Activated B cell treated with CpG ODN at 0.5 μM for 24 hours (primary cell): ENCODE measurements at regions of chr16 and their contacts with region 1.

Region 1: DNA sequence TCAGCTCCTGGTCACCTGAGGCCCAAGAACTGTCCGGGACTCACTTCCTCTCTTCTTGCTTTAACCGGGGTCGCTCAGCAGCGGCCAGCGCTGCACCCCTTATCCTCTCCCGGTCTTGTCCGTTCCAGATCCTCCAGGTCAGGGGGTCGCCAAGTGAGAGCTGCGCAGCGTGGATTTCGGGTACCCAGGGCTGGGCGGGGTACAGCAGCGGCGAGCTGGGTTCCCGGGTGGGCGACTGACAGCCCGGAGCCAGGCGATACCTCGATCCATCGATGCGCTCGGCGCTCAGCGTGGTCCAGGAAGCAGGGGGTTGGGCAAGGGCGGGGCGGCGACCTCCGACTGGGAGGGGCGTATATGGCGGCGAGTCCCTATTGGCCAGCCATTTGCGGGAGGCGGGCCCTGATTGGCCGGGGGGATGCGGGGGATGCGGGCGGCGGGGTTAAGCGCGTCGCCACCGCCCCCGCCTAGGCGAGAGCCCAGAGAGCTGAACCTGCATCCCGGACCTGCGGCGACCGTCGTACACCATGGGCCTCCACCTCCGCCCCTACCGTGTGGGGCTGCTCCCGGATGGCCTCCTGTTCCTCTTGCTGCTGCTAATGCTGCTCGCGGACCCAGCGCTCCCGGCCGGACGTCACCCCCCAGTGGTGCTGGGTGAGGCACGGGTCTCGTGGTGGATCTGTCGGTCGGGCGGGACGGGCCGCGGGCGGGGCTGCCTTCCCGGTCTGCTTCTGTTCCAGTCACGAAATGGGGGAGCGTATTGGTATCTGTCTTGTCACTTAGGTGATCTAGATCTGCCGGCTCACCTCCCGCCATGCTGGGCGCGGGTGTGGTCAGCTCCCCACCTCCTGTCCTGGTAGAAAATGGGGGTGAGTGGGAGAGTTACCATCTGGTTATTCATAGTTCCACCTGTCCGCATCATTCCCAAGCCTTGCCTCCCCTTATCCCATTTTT is at the start of gene PLA2G15:
- DNase-seq: peak; percentile 96
- ATAC-seq: peak; percentile 99
- H3K4me3 Mint-ChIP-seq: peak within 1 kb of the TSS; percentile 98
- H3K27ac Mint-ChIP-seq: peak within 1 kb of the TSS; percentile 85
- H3K4me1 Mint-ChIP-seq: peaks cover 32% of the 10 kb centered on the region
- H3K27me3 Mint-ChIP-seq: no peaks in the 10 kb centered on the region
- CTCF ChIP-seq: no peak
- total RNA-seq, gene PLA2G15: 5.7 and 8.6 TPM in 2 replicates

Region 2: DNA sequence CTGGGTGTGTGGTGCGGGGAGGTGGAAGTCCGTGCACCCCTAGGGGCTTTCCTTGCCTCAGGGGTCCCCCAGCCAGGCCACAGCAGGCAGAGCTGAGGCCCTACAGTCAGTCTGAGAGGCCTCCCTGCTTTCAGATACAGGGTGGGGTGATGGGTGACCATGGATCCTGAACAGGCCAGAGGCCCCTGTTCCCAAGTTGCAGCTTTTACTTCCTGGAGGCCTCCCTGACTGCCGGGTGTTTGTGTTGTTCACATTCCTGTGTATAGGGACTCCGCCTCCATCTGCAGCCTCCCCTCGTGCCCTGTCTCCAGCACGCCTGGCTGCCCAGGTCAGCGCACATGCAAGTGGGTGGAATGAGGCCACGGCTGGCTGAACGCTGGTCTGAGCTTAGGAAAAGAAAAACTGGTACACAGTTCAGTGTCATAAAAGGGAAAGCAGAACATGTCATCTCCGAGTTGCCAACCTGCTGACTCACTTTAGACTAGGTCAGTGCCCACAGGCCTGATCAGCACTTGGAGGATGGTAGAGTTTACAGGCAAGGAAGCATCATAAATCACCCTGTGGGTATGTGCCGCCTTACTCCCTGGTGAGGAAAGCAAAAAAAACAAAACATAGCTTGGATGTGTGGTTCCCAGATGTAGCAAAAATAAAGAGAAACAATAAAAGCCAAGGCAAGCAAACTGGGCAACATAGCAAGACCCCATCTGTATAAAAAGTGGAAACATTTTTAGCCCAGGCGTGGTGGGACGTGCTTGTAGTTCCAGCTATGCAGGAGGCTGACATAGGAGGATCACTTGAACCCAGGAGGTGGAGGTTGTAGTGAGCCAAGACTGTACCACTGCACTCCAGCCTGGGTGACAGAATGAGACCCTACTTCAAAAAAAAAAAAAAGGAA is 13.0 kb after region 1 on chr16:
- CTCF ChIA-PET with region 1: interaction called, 11 read pairs
- POLR2A ChIA-PET with region 1: interaction called, 10 read pairs
- intact Hi-C with region 1: loop called (anchors 1 kb)
- DNase-seq: no peak
- ATAC-seq: peak; percentile 43
- H3K4me3 Mint-ChIP-seq: peak overlapping the region; percentile 44
- H3K27ac Mint-ChIP-seq: peak overlapping the region; percentile 88
- H3K4me1 Mint-ChIP-seq: peaks cover 34% of the 10 kb centered on the region
- H3K27me3 Mint-ChIP-seq: no peaks in the 10 kb centered on the region
- CTCF ChIP-seq: no peak

Region 3: DNA sequence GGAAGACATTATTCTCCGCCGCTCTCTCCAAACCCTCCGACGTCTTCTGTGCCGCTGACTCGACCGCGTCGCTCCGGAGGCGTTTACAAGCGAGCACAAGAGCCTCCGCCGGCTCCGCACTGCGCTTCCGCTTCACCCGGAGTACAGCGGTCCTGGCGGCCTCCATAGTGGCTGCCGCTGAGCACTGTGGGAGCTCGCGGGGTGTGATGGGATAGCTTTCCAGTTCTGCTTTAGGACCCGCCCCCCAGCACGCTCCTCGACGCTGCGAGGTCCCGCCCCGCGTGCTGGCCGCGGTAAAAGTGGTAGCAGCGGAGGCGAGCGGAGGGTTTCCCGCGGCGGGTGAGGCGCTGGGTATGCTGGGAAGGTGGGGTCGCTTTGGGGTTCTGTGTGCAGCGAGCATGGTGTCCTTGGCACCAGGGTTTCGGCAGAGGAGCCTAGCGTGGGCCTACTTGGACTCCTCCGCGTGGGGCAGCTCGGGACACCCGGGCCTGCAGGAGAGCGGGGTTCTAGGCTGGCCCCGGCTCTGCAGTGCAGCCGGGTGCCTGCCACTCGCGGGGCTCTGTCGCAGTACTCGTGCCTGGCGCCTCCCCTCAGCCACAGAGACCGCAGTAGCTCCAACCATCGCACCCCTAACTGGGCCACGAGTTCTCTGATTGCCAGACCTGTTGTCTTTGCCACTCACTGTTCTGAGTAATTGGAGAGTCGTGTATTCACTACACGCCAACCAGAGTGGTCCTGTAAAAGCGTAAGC is 65.8 kb after region 1 on chr16 and contains the starts of genes PRMT7 and SLC7A6OS:
- CTCF ChIA-PET with region 1: interaction called, 4 read pairs
- POLR2A ChIA-PET with region 1: interaction called, 11 read pairs
- intact Hi-C with region 1: loop called (anchors 2 kb)
- DNase-seq: peak; percentile 87
- ATAC-seq: peak; percentile 99
- H3K4me3 Mint-ChIP-seq: peak within 1 kb of the TSS; percentile 98
- H3K27ac Mint-ChIP-seq: peak within 1 kb of the TSS; percentile 93
- H3K4me1 Mint-ChIP-seq: peaks cover 38% of the 10 kb centered on the region
- H3K27me3 Mint-ChIP-seq: no peaks in the 10 kb centered on the region
- CTCF ChIP-seq: no peak
- total RNA-seq, gene PRMT7: 41.8 and 50.3 TPM in 2 replicates
- total RNA-seq, gene SLC7A6OS: 34.8 and 42.0 TPM in 2 replicates

Region 4: DNA sequence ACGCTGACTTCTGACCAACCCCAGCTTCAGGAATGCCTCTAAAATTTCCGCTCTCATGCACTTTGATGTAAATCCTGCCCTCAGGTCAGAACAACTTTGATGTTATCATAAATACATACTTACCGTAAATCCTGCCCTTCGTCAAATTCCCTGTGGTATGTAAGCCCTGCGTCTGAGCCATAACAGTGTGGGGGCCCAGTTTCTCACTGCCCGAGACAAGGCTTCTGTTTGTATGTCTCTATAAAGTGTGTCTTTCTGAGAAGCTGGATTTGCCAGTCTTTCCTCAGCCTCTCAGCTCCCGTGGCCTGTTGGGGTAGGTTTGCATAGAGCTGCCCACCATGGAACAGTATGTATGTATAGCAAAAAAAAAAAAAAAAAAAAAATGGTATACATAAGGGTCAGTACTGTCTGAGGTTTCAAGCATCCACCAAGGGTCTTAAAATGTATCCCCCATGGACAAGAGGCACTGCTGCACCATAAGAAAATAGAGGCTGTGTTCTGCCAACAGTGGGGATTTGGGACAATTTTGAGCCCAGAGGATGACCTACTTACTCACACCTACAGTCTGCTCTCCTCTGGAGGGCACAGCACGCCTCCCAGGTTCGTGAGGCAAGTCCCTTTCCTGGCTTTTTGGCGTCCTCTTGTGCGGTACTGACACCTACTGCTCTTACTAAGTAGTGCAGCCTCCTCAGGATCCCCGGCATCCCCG is 83.1 kb after region 1 on chr16:
- CTCF ChIA-PET with region 1: interaction called, 23 read pairs
- POLR2A ChIA-PET with region 1: no interaction called
- intact Hi-C with region 1: loop called (anchors 1 kb)
- DNase-seq: peak; percentile 61
- ATAC-seq: peak; percentile 100
- H3K4me3 Mint-ChIP-seq: no peak overlapping the region
- H3K27ac Mint-ChIP-seq: no peak overlapping the region
- H3K4me1 Mint-ChIP-seq: peaks cover 14% of the 10 kb centered on the region
- H3K27me3 Mint-ChIP-seq: no peaks in the 10 kb centered on the region
- CTCF ChIP-seq: peak; percentile 99

Region 5: DNA sequence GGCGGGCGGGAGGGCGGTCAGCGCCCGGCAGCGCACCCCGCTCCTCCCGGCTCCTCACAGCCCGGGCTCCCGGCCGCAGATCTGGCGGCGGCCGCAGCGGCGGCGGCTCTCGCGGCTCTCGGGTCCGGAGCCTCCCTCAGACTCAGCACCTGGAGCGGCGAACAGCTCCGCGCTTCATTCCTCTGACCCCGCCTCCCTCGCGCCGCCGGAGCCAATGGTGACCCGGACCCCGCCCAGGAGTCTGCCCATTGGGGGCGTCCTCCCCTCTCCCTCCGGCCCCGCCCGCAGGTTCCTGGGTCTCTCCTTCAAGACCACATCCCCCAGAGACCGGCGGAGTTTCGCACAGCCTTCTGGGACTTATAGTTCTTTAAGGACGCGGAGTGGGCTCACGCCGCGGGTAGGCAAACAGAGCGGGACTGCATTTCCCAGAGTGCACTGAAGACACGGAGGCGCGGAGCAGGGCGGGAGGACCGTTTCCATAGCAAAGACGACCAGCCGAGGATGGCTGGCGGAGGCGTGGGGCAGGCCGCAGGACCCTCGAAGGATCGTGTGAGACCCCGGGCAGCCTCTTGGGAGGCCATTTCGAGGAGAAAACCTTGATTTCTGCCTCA is 203.3 kb after region 1 on chr16 and contains the start of gene SMPD3:
- CTCF ChIA-PET with region 1: no interaction called
- POLR2A ChIA-PET with region 1: no interaction called
- intact Hi-C with region 1: loop called (anchors 10 kb)
- DNase-seq: peak; percentile 95
- ATAC-seq: peak; percentile 98
- H3K4me3 Mint-ChIP-seq: peak within 1 kb of the TSS; percentile 61
- H3K27ac Mint-ChIP-seq: peak within 1 kb of the TSS; percentile 7
- H3K4me1 Mint-ChIP-seq: peaks cover 23% of the 10 kb centered on the region
- H3K27me3 Mint-ChIP-seq: peaks cover 12% of the 10 kb centered on the region
- CTCF ChIP-seq: no peak
- total RNA-seq, gene SMPD3: 0.35 and 0.76 TPM in 2 replicates

Region 6: DNA sequence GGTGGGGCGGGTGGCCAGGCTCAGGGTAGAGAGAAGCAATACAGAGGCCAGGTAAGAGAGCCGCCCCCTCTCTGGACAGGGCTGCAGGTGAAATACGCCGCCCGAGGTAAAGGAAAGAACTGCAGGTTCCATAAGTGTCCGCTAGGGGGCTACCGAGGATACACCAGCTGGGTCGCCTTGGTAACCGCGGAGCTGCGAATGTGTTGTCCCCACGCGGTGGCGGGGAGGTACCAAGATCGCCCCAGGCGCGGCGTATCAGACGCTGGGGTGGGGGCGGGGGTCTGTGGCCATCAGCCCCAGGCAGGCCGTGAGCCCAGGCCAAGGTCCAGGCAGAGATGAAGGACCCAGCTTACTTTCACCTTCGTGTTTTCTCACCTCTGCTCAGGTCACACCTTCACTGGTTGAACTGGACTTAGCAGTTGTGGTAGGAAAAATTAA is 275.5 kb after region 1 on chr16:
- CTCF ChIA-PET with region 1: no interaction called
- POLR2A ChIA-PET with region 1: no interaction called
- intact Hi-C with region 1: loop called (anchors 5 kb)
- DNase-seq: peak; percentile 69
- ATAC-seq: peak; percentile 98
- H3K4me3 Mint-ChIP-seq: peak overlapping the region; percentile 52
- H3K27ac Mint-ChIP-seq: peak overlapping the region; percentile 12
- H3K4me1 Mint-ChIP-seq: peaks cover 14% of the 10 kb centered on the region
- H3K27me3 Mint-ChIP-seq: no peaks in the 10 kb centered on the region
- CTCF ChIP-seq: peak; percentile 77